Activated B cell treated with CpG ODN at 0.5 μM for 24 hours (primary cell): ENCODE measurements at regions of chr11 and their contacts with region 1.

Region 1: GRCh38 chr11:95231127-95231880 is at the start of gene SESN3:
- DNase-seq: peak; percentile 96
- ATAC-seq: peak; percentile 85
- H3K4me3 Mint-ChIP-seq: no peak within 1 kb of the TSS
- H3K27ac Mint-ChIP-seq: peak within 1 kb of the TSS; percentile 92
- H3K4me1 Mint-ChIP-seq: peaks cover 58% of the 10 kb centered on the region
- H3K27me3 Mint-ChIP-seq: no peaks in the 10 kb centered on the region
- CTCF ChIP-seq: no peak
- total RNA-seq, gene SESN3: 82.3 and 87.2 TPM in 2 replicates

Region 2: DNA sequence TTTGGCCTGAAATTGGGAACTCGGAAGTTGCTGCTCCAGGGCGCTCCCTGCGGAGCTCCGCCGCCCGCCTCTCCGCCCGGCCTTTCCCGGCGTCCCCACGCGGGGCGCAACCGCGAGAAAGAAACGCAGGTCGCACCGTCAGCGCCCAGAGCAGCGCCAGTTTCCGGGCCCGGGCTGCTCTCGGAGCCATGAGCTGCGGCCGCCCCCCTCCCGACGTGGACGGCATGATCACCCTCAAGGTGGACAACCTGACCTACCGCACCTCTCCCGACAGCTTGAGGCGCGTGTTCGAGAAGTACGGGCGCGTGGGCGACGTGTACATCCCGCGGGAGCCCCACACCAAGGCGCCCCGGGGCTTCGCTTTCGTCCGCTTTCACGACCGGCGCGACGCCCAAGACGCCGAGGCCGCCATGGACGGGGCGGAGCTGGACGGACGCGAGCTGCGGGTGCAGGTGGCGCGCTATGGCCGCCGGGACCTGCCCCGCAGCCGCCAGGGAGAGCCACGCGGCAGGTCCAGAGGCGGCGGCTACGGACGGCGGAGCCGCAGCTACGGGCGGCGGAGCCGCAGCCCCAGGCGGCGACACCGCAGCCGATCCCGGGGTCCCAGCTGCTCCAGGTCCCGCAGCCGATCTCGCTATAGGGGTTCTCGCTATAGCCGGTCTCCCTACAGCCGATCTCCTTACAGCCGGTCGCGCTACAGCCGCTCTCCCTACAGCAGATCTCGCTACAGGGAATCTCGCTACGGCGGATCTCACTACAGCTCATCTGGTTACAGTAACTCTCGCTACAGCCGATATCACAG is 164.1 kb before region 1 on chr11:
- CTCF ChIA-PET with region 1: no interaction called
- POLR2A ChIA-PET with region 1: interaction called, 25 read pairs
- intact Hi-C with region 1: loop called (anchors 1 kb)
- DNase-seq: peak; percentile 76
- ATAC-seq: peak; percentile 71
- H3K4me3 Mint-ChIP-seq: peak overlapping the region; percentile 93
- H3K27ac Mint-ChIP-seq: peak overlapping the region; percentile 99
- H3K4me1 Mint-ChIP-seq: peaks cover 29% of the 10 kb centered on the region
- H3K27me3 Mint-ChIP-seq: no peaks in the 10 kb centered on the region
- CTCF ChIP-seq: no peak

Region 3: GRCh38 chr11:95212609-95213008 is 18.7 kb before region 1 on chr11:
- CTCF ChIA-PET with region 1: interaction called, 4 read pairs
- POLR2A ChIA-PET with region 1: interaction called, 26 read pairs
- intact Hi-C with region 1: no loop called
- DNase-seq: no peak
- ATAC-seq: no peak
- H3K4me3 Mint-ChIP-seq: no peak overlapping the region
- H3K27ac Mint-ChIP-seq: no peak overlapping the region
- H3K4me1 Mint-ChIP-seq: peaks cover 39% of the 10 kb centered on the region
- H3K27me3 Mint-ChIP-seq: no peaks in the 10 kb centered on the region
- CTCF ChIP-seq: no peak

Region 4: GRCh38 chr11:95279921-95280868 is 48.9 kb after region 1 on chr11:
- CTCF ChIA-PET with region 1: no interaction called
- POLR2A ChIA-PET with region 1: interaction called, 29 read pairs
- intact Hi-C with region 1: loop called (anchors 1 kb)
- DNase-seq: peak; percentile 24
- ATAC-seq: peak; percentile 84
- H3K4me3 Mint-ChIP-seq: peak overlapping the region; percentile 39
- H3K27ac Mint-ChIP-seq: peak overlapping the region; percentile 85
- H3K4me1 Mint-ChIP-seq: peaks cover 49% of the 10 kb centered on the region
- H3K27me3 Mint-ChIP-seq: no peaks in the 10 kb centered on the region
- CTCF ChIP-seq: no peak

Region 5: DNA sequence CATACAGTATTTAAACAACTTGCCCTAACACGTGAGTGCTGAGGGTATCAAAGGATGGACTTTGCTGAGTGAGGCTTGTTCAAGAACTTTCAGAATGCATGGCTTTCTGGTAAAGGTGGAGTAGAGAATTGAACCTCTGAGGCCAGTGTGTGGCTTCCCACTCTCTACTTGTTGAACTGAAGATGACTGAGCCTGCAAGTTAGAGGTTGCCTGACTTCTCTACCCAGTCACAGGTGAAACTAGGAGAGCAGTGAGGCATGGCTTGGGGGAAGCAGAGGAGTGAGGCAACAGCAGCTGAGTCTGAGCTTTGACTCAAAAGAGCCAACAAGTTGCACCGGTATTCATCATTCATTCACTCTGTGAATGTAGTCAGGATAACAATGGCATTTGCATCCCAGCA is 256.1 kb after region 1 on chr11:
- CTCF ChIA-PET with region 1: no interaction called
- POLR2A ChIA-PET with region 1: interaction called, 10 read pairs
- intact Hi-C with region 1: no loop called
- DNase-seq: peak; percentile 26
- ATAC-seq: peak; percentile 100
- H3K4me3 Mint-ChIP-seq: no peak overlapping the region
- H3K27ac Mint-ChIP-seq: peak overlapping the region; percentile 84
- H3K4me1 Mint-ChIP-seq: peaks cover 14% of the 10 kb centered on the region
- H3K27me3 Mint-ChIP-seq: no peaks in the 10 kb centered on the region
- CTCF ChIP-seq: no peak

Region 6: GRCh38 chr11:95536047-95536690 is 304.9 kb after region 1 on chr11:
- CTCF ChIA-PET with region 1: no interaction called
- POLR2A ChIA-PET with region 1: no interaction called
- intact Hi-C with region 1: no loop called
- DNase-seq: no peak
- ATAC-seq: no peak
- H3K4me3 Mint-ChIP-seq: no peak overlapping the region
- H3K27ac Mint-ChIP-seq: no peak overlapping the region
- H3K4me1 Mint-ChIP-seq: no peaks in the 10 kb centered on the region
- H3K27me3 Mint-ChIP-seq: no peaks in the 10 kb centered on the region
- CTCF ChIP-seq: no peak

Region 7: GRCh38 chr11:95715777-95716241 is 484.5 kb after region 1 on chr11:
- CTCF ChIA-PET with region 1: interaction called, 16 read pairs
- POLR2A ChIA-PET with region 1: interaction called, 69 read pairs
- intact Hi-C with region 1: loop called (anchors 1 kb)
- DNase-seq: peak; percentile 39
- ATAC-seq: peak; percentile 78
- H3K4me3 Mint-ChIP-seq: peak overlapping the region; percentile 75
- H3K27ac Mint-ChIP-seq: peak overlapping the region; percentile 95
- H3K4me1 Mint-ChIP-seq: peaks cover 92% of the 10 kb centered on the region
- H3K27me3 Mint-ChIP-seq: no peaks in the 10 kb centered on the region
- CTCF ChIP-seq: no peak

Region 8: GRCh38 chr11:96664110-96664509 is 1432.8 kb after region 1 on chr11:
- CTCF ChIA-PET with region 1: no interaction called
- POLR2A ChIA-PET with region 1: no interaction called
- intact Hi-C with region 1: no loop called
- DNase-seq: no peak
- ATAC-seq: no peak
- H3K4me3 Mint-ChIP-seq: no peak overlapping the region
- H3K27ac Mint-ChIP-seq: no peak overlapping the region
- H3K4me1 Mint-ChIP-seq: no peaks in the 10 kb centered on the region
- H3K27me3 Mint-ChIP-seq: no peaks in the 10 kb centered on the region
- CTCF ChIP-seq: no peak